Heart left ventricle (tissue), 16 donors: ENCODE measurements at regions of chr6 and their contacts with region 1.

Region 1: DNA sequence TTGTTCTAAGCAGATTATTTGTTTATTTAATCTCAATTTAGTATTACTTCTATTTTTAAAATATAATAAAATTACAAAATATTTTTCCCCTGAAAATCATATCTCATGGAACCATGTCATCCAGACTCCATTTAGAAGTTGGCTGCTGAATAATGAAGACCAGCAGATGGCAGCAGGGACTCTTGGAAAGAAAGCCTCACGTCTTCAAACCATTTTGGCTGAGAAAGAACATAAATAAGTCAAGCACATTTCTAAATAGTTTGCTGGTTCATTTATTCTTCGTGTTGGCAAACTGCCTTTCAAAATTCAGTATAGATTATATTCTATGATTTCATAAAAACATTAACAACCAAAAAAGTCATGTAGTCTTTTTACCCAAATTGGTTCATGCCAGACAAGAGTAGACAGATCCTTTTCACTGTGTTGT is 71.7 kb downstream of the RCAN2 start:
- DNase-seq: peak in 4 of 5 donors; percentile 41 to 65 (median 54)
- ATAC-seq: peak in 2 of 4 donors; percentile 55 to 58
- H3K4me3 ChIP-seq: no peak overlapping the region
- H3K27ac ChIP-seq: peak overlapping the region in 5 of 12 donors; percentile 11 to 61 (median 21)
- H3K4me1 ChIP-seq: peaks cover 0 to 37% (median 14%) of the 10 kb centered on the region in 12 donors
- H3K27me3 ChIP-seq: no peaks in the 10 kb centered on the region
- CTCF ChIP-seq: peak; percentile 64 to 89 (median 80)
- POLR2A ChIP-seq: no peak

Region 2: DNA sequence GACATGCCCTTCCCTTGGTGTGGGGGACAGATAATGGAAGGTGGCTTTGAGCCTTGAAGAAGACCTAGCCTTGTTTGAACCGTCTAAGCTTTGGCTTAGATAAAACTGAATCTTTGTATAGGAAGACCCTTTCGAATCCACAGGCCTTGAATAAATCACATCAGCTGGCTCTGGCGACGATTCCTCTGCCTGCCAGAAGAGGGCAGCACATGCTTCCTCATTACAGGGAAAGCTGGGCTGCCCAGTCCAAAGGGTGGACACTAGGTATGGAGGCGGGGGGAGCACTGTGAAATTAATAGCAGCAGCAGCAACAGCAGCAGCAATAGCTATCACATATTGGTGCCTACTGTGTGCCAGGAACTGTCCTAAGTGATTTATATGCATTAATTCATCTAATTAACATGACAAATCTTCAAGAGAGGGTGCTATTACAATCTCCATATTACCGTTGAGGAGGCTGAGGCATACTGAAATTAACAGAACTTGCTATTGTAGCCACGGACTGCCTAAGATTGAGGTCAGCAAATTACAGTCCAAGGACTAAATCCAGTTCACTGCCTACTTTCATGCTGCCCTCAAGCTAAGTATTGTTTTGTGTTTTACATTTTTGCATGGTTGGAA is 489.1 kb before region 1 on chr6:
- intact Hi-C with region 1: loop called in 5 of 10 experiments (anchors 5 to 10 kb)
- DNase-seq: peak; percentile 68 to 83 (median 70)
- ATAC-seq: peak; percentile 59 to 80 (median 74)
- H3K4me3 ChIP-seq: no peak overlapping the region
- H3K27ac ChIP-seq: peak overlapping the region in 9 of 12 donors; percentile 7 to 58 (median 22)
- H3K4me1 ChIP-seq: peaks cover 0 to 61% (median 20%) of the 10 kb centered on the region in 12 donors
- H3K27me3 ChIP-seq: no peaks in the 10 kb centered on the region
- CTCF ChIP-seq: peak; percentile 95 to 99 (median 96)
- POLR2A ChIP-seq: peak in 1 of 2 donors; percentile 23

Region 3: GRCh38 chr6:46263707-46264086 is 155.9 kb before region 1 on chr6:
- intact Hi-C with region 1: no loop called
- DNase-seq: no peak
- ATAC-seq: peak in 2 of 4 donors; percentile 27 to 53
- H3K4me3 ChIP-seq: no peak overlapping the region
- H3K27ac ChIP-seq: peak overlapping the region in 5 of 12 donors; percentile 14 to 35 (median 19)
- H3K4me1 ChIP-seq: peaks cover 4 to 47% (median 19%) of the 10 kb centered on the region in 12 donors
- H3K27me3 ChIP-seq: no peaks in the 10 kb centered on the region
- CTCF ChIP-seq: no peak
- POLR2A ChIP-seq: no peak

Region 4: GRCh38 chr6:46626228-46626909 is 206.8 kb after region 1 on chr6:
- intact Hi-C with region 1: loop called (anchors 2 to 5 kb)
- DNase-seq: no peak
- ATAC-seq: peak in 1 of 4 donors; percentile 59
- H3K4me3 ChIP-seq: peak overlapping the region in 2 of 12 donors; percentile 23 to 28
- H3K27ac ChIP-seq: no peak overlapping the region
- H3K4me1 ChIP-seq: peaks cover 0 to 11% (median 0%) of the 10 kb centered on the region in 12 donors
- H3K27me3 ChIP-seq: no peaks in the 10 kb centered on the region
- CTCF ChIP-seq: peak; percentile 37 to 77 (median 68)
- POLR2A ChIP-seq: no peak

Region 5: DNA sequence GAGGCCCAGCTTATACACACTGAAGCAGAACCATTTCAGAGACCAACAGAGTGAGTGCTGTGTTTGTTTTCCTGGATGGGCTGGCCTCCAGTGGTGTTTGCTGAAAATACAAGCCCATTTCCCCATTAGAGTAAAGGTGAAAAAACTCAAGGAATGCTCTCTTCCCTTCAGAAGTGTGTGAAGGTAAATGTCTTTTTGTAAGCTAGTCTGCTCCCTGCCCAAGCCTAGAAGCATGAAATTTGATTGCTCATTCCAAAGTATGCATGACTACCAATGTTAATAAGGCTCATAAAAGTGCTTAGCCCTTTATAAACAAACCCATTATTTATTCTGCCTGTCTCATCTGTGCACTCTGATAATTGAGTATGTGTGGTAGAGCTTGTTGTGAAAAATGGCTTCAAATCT is 563.4 kb after region 1 on chr6:
- intact Hi-C with region 1: loop called in 1 of 10 experiments (anchors 10 kb)
- DNase-seq: no peak
- ATAC-seq: no peak
- H3K4me3 ChIP-seq: no peak overlapping the region
- H3K27ac ChIP-seq: no peak overlapping the region
- H3K4me1 ChIP-seq: peaks cover 0 to 18% (median 0%) of the 10 kb centered on the region in 12 donors
- H3K27me3 ChIP-seq: no peaks in the 10 kb centered on the region
- CTCF ChIP-seq: peak in 2 of 12 donors; percentile 8 to 31
- POLR2A ChIP-seq: no peak

Region 6: DNA sequence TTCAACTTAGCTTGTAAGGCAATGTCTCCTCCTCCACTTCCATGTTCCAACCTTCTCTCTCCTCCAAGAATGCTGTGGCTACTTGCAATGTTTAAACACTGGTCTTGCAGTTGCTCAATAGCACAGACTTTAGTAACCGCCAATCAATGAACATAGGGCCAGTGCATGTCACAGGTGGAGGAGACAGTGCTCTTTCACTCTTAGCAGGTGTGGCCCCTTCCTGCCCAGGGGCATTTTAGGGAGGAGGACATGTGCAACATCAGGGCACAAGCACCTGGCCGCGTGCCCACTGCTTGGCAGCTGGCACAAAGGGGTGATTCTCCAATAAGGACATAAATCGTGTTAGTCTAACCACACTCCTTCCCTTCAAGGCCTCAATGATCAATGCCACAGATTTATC is 581.3 kb after region 1 on chr6:
- intact Hi-C with region 1: loop called in 3 of 10 experiments (anchors 5 to 10 kb)
- DNase-seq: no peak
- ATAC-seq: no peak
- H3K4me3 ChIP-seq: no peak overlapping the region
- H3K27ac ChIP-seq: no peak overlapping the region
- H3K4me1 ChIP-seq: no peaks in the 10 kb centered on the region
- H3K27me3 ChIP-seq: no peaks in the 10 kb centered on the region
- CTCF ChIP-seq: no peak
- POLR2A ChIP-seq: no peak